Motor neuron (in vitro differentiated cells): ENCODE measurements at regions of chr19 and their contacts with region 1.

Region 1: DNA sequence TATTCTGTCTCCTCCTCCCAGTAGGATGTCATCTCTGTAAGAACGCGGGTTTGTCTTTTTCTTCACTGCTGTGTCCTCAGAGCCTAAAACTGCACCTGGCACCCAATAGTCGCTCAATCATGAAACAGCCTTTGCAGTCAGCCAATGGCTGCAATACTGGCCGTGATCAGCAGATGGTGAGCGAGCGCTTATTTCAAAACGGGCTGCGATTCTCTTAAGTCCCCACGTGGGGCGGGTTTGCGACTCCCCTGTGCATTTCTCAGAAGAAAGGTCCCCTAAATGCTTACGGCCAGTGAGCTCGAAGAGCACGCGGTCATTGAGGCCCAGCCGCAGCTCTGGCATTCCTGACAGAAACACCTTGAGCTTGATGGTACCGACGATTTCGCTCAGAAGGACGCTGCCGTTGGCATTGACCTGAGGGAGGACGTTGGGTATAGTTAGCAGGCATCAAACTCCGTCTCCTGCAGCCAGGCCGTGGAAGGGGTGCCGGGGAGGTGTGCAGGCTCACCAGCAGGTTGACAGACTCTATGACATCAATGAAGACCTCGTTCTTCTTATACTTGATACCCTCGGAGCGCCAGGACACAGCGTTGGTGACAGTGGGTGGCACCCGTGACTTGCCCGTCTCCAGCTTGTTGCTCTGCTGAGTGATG is 6.0 kb downstream of the AP1M2 start:
- ATAC-seq: peak; percentile 79 to 95 (median 86)
- H3K4me3 ChIP-seq: no peak overlapping the region
- H3K27ac ChIP-seq: no peak overlapping the region
- H3K4me1 ChIP-seq: peaks cover 0 to 3% of the 10 kb centered on the region in 2 donors

Region 2: GRCh38 chr19:10644260-10645007 is 63.3 kb after region 1 on chr19:
- in situ Hi-C with region 1: loop called in 2 of 9 experiments (anchors 5 to 10 kb)
- ATAC-seq: peak; percentile 79 to 92 (median 83)
- H3K4me3 ChIP-seq: no peak overlapping the region
- H3K27ac ChIP-seq: peak overlapping the region in 1 of 2 donors; percentile 37
- H3K4me1 ChIP-seq: peaks cover 0 to 12% of the 10 kb centered on the region in 2 donors

Region 3: GRCh38 chr19:10870955-10871603 is 290.0 kb after region 1 on chr19 and contains the start of gene CARM1:
- in situ Hi-C with region 1: loop called in 1 of 9 experiments (anchors 25 kb)
- ATAC-seq: peak; percentile 84 to 90 (median 86)
- H3K4me3 ChIP-seq: peak within 1 kb of the TSS; percentile 55 to 89 (median 74)
- H3K27ac ChIP-seq: peak within 1 kb of the TSS; percentile 82 to 91
- H3K4me1 ChIP-seq: peaks cover 7 to 15% of the 10 kb centered on the region in 2 donors
- total RNA-seq, gene CARM1: 23.8 to 62.4 (median 34.4) TPM